ENCODE measurements at regions of chr14 and their contacts with region 1.

Region 1: GRCh38 chr14:21431126-21431525 is 24.8 kb downstream of the CHD8 start:
- DNase-seq: no peak
- H3K4me3 ChIP-seq: no peak overlapping the region
- H3K27ac ChIP-seq: no peak overlapping the region
- H3K4me1 ChIP-seq: peaks cover 0 to 7% of the 10 kb centered on the region in 2 donors
- H3K27me3 ChIP-seq: no peaks in the 10 kb centered on the region
- CTCF ChIP-seq: no peak

Region 2: GRCh38 chr14:21467616-21468015 is 36.5 kb after region 1 on chr14:
- intact Hi-C with region 1: loop called (anchors 5 kb)
- DNase-seq: no peak
- H3K4me3 ChIP-seq: no peak overlapping the region
- H3K27ac ChIP-seq: no peak overlapping the region
- H3K4me1 ChIP-seq: no peaks in the 10 kb centered on the region
- H3K27me3 ChIP-seq: no peaks in the 10 kb centered on the region
- CTCF ChIP-seq: no peak